ENCODE measurements at regions of chr13 and their contacts with region 1.

Region 1: DNA sequence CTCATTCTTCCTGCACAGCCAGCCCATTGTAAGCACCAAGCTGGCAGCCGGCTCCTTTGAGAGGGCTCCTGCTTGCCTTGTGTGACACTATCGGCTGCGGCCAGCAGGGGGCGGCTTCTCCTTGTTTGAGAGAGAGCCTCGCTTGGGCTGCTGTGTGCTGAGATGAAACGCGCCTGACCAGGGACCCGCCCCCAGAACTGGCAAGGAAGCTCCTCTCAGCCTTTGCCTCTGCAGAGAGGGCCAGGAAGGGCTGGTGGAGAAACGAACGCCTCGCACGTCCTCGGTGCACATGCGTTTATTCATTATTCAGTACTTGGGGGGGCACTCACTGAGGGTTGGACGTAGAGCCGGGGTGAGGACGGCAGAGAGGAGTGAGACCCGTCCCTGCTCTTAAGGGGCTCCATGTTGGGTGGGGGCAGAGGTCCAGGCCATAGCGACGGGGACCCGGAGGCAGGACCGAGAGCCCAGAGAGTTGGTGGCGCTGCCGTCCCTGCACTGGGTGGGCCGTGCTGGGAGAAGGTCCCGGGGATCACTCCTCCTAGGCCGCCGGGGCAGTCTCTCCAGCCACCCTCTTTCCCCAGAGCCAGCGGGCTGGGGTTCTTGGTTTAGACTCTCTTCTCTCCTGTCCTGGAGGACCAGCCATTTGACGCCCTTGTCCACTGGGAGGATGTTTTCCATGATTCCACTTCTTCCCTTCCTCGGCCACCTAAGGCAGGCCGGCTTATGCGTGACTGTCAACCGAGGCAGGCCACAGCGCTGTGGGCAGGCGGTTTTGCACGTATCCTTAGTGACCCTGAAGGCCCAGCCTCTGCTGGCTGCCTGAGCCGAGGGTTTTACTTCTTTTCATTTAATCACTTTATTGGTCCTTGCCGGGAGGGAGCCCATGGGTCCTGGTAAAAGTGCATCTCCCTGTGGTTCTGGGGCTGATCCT is 174.5 kb downstream of the KATNAL1 start:
- H3K4me3 ChIP-seq: no peak overlapping the region
- H3K27ac ChIP-seq: no peak overlapping the region
- H3K4me1 ChIP-seq: no peaks in the 10 kb centered on the region
- CTCF ChIP-seq: peak; percentile 62

Region 2: DNA sequence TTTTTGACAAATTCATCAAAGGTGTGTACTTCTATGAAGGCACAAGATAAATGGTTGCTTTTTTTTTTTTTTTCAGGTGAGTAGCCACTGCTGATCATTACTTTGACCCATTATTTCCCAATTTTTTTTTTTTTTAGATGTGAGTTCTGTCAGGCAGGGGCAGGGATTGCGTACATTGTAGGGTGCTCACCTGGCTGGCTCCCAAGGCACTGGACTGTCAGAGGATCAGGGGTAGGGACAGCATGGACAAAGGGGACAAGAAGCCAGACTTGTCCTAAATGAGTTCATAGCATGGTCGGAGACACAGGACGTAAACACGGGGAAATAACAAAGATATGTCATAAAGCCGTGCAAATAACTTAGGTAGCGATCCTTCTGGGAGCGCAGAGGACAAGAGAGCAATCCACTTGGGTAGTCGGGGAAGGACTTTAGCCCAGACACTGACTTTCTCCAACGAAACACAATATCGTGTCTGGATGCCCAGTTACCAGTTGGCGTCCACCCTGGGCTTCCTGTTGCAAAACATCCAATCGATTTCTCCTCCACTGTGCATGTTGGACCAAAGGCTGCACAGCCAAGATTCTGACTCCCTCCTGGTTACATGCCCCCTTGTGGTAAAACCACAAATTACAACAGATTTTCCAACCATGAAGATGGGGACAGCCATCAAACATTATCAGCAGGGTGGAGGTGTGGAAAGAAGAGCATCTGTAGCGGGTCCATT is 201.9 kb after region 1 on chr13:
- CTCF ChIA-PET with region 1: interaction called, 19 read pairs
- POLR2A ChIA-PET with region 1: no interaction called
- H3K4me3 ChIP-seq: no peak overlapping the region
- H3K27ac ChIP-seq: no peak overlapping the region
- H3K4me1 ChIP-seq: peaks cover 4% of the 10 kb centered on the region
- CTCF ChIP-seq: no peak